BJ (cell line): ENCODE measurements at regions of chr9 and their contacts with region 1.

Region 1: GRCh38 chr9:123528501-123528900 is 172.5 kb downstream of the CRB2 start:
- DNase-seq: no peak
- H3K4me3 ChIP-seq: no peak overlapping the region
- H3K27me3 ChIP-seq: no peaks in the 10 kb centered on the region
- CTCF ChIP-seq: no peak

Region 2: GRCh38 chr9:123544007-123544827 is 15.7 kb after region 1 on chr9:
- CTCF ChIA-PET with region 1: interaction called, 10 read pairs
- POLR2A ChIA-PET with region 1: no interaction called
- DNase-seq: no peak
- H3K4me3 ChIP-seq: no peak overlapping the region
- H3K27me3 ChIP-seq: no peaks in the 10 kb centered on the region
- CTCF ChIP-seq: peak; percentile 80